ENCODE measurements at regions of chr12 and their contacts with region 1.

Region 1: DNA sequence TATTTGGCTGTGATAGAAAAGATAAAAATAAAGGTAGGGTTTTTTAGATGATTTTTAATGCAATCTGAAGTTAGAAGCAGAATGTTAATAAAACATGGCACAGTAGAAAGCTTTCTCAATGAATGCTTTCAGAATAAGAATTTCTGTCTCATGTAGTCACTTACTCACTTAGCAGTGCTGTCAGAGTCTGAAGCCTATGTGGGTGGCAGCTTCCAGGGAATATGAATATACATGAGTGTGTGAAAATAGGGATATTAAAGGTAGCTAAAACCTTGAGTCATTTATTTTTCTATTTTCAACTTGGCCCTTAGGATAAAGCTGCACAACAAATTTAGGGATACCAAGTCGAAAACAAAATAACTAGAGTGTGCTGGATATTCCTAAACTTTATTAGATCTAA is 427.9 kb downstream of the AEBP2 start:
- DNase-seq: no peak
- ATAC-seq: no peak
- H3K4me3 ChIP-seq: no peak overlapping the region
- H3K4me3 Mint-ChIP-seq: no peak overlapping the region
- H3K27ac ChIP-seq: no peak overlapping the region
- H3K27ac Mint-ChIP-seq: no peak overlapping the region
- H3K4me1 ChIP-seq: no peaks in the 10 kb centered on the region
- H3K4me1 Mint-ChIP-seq: no peaks in the 10 kb centered on the region
- H3K27me3 ChIP-seq: no peaks in the 10 kb centered on the region
- H3K27me3 Mint-ChIP-seq: no peaks in the 10 kb centered on the region

Region 2: GRCh38 chr12:19144287-19144686 is 722.9 kb before region 1 on chr12:
- CTCF ChIA-PET with region 1: no interaction called
- POLR2A ChIA-PET with region 1: interaction called in 1 of 2 experiments, 10 read pairs
- DNase-seq: no peak
- ATAC-seq: no peak
- H3K4me3 ChIP-seq: no peak overlapping the region
- H3K4me3 Mint-ChIP-seq: no peak overlapping the region
- H3K27ac ChIP-seq: no peak overlapping the region
- H3K27ac Mint-ChIP-seq: no peak overlapping the region
- H3K4me1 ChIP-seq: no peaks in the 10 kb centered on the region
- H3K4me1 Mint-ChIP-seq: no peaks in the 10 kb centered on the region
- H3K27me3 ChIP-seq: no peaks in the 10 kb centered on the region
- H3K27me3 Mint-ChIP-seq: no peaks in the 10 kb centered on the region

Region 3: GRCh38 chr12:19402743-19403492 is 464.2 kb before region 1 on chr12:
- CTCF ChIA-PET with region 1: no interaction called
- POLR2A ChIA-PET with region 1: no interaction called
- DNase-seq: no peak
- ATAC-seq: no peak
- H3K4me3 ChIP-seq: no peak overlapping the region
- H3K4me3 Mint-ChIP-seq: peak overlapping the region in 1 of 3 donors; percentile 55
- H3K27ac ChIP-seq: no peak overlapping the region
- H3K27ac Mint-ChIP-seq: peak overlapping the region in 1 of 2 donors; percentile 16
- H3K4me1 ChIP-seq: peaks cover 2 to 42% of the 10 kb centered on the region in 2 experiments
- H3K4me1 Mint-ChIP-seq: peaks cover 13 to 19% (median 16%) of the 10 kb centered on the region in 3 donors
- H3K27me3 ChIP-seq: no peaks in the 10 kb centered on the region
- H3K27me3 Mint-ChIP-seq: no peaks in the 10 kb centered on the region

Region 4: GRCh38 chr12:19482551-19483109 is 384.5 kb before region 1 on chr12:
- CTCF ChIA-PET with region 1: no interaction called
- POLR2A ChIA-PET with region 1: no interaction called
- DNase-seq: peak in 29 of 35 experiments; percentile 1 to 52 (median 18)
- ATAC-seq: peak; percentile 69 to 83 (median 73)
- H3K4me3 ChIP-seq: peak overlapping the region in 1 of 2 donors; percentile 32
- H3K4me3 Mint-ChIP-seq: peak overlapping the region; percentile 28 to 62 (median 46)
- H3K27ac ChIP-seq: peak overlapping the region; percentile 65
- H3K27ac Mint-ChIP-seq: peak overlapping the region; percentile 87 to 90
- H3K4me1 ChIP-seq: peaks cover 26 to 34% of the 10 kb centered on the region in 2 experiments
- H3K4me1 Mint-ChIP-seq: peaks cover 66 to 79% (median 70%) of the 10 kb centered on the region in 3 donors
- H3K27me3 ChIP-seq: no peaks in the 10 kb centered on the region
- H3K27me3 Mint-ChIP-seq: no peaks in the 10 kb centered on the region